B cell (primary cell): ENCODE measurements at regions of chr22 and their contacts with region 1.

Region 1: GRCh38 chr22:31749636-31750364 is at the start of gene PRR14L:
- DNase-seq: peak; percentile 99
- ATAC-seq: peak; percentile 74
- H3K4me3 ChIP-seq: peak within 1 kb of the TSS; percentile 81 to 95 (median 83)
- H3K4me3 Mint-ChIP-seq: peak within 1 kb of the TSS; percentile 95
- H3K27ac ChIP-seq: peak within 1 kb of the TSS; percentile 72 to 93
- H3K27ac Mint-ChIP-seq: peak within 1 kb of the TSS; percentile 99
- H3K4me1 ChIP-seq: peaks cover 41 to 43% of the 10 kb centered on the region in 2 donors
- H3K4me1 Mint-ChIP-seq: peaks cover 52% of the 10 kb centered on the region
- H3K27me3 ChIP-seq: no peaks in the 10 kb centered on the region
- H3K27me3 Mint-ChIP-seq: no peaks in the 10 kb centered on the region
- CTCF ChIP-seq: peak; percentile 17
- total RNA-seq, gene PRR14L: 69.6 and 78.5 TPM in 2 replicates

Region 2: DNA sequence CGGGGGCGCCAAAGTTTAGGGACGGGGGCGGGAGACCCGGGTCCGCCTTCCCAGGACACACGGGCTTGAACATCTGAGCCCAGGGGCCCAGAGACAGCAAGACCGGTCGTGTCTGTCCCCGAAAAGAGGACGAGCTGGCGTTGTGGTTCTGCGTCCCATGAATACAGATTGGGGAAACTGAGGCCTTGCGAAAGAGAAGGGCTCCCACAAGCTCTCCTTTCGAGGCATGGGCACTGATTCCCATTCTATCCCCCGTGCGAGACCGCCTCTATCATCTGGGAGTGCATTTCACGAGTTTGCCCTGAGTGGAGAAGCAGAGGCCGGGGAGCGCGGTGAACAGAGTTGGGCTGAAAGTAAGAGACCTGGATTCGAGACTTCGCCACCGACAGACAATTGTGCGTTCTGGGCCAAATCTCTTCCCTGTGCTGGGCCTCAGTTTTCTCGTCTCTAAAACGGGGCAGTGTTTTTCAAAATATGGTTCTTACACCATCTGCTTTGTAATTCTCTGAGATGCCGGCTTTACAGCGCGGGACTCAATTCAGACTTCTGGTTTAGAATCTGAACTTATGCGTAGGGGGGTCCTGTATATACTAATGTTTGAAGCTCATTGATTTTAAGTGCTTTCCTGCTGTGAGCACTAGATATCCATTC is 589.3 kb before region 1 on chr22:
- CTCF ChIA-PET with region 1: no interaction called
- POLR2A ChIA-PET with region 1: no interaction called
- intact Hi-C with region 1: loop called (anchors 5 kb)
- DNase-seq: no peak
- ATAC-seq: peak; percentile 29
- H3K4me3 ChIP-seq: peak overlapping the region; percentile 65 to 81 (median 74)
- H3K4me3 Mint-ChIP-seq: peak overlapping the region; percentile 95
- H3K27ac ChIP-seq: peak overlapping the region; percentile 82 to 83
- H3K27ac Mint-ChIP-seq: peak overlapping the region; percentile 95
- H3K4me1 ChIP-seq: peaks cover 19 to 24% of the 10 kb centered on the region in 2 donors
- H3K4me1 Mint-ChIP-seq: peaks cover 33% of the 10 kb centered on the region
- H3K27me3 ChIP-seq: peaks cover 0 to 2% (median 0%) of the 10 kb centered on the region in 4 experiments
- H3K27me3 Mint-ChIP-seq: no peaks in the 10 kb centered on the region
- CTCF ChIP-seq: no peak

Region 3: GRCh38 chr22:31399211-31400028 is 350.4 kb before region 1 on chr22 and contains the start of gene DRG1:
- CTCF ChIA-PET with region 1: no interaction called
- POLR2A ChIA-PET with region 1: no interaction called
- intact Hi-C with region 1: loop called (anchors 2 kb)
- DNase-seq: peak; percentile 95
- ATAC-seq: peak; percentile 99
- H3K4me3 ChIP-seq: peak within 1 kb of the TSS; percentile 79 to 88 (median 85)
- H3K4me3 Mint-ChIP-seq: peak within 1 kb of the TSS; percentile 98
- H3K27ac ChIP-seq: peak within 1 kb of the TSS; percentile 60 to 89
- H3K27ac Mint-ChIP-seq: peak within 1 kb of the TSS; percentile 95
- H3K4me1 ChIP-seq: peaks cover 13 to 17% of the 10 kb centered on the region in 2 donors
- H3K4me1 Mint-ChIP-seq: peaks cover 21% of the 10 kb centered on the region
- H3K27me3 ChIP-seq: no peaks in the 10 kb centered on the region
- H3K27me3 Mint-ChIP-seq: peaks cover 2% of the 10 kb centered on the region
- CTCF ChIP-seq: no peak
- total RNA-seq, gene DRG1: 58.9 and 77.7 TPM in 2 replicates

Region 4: DNA sequence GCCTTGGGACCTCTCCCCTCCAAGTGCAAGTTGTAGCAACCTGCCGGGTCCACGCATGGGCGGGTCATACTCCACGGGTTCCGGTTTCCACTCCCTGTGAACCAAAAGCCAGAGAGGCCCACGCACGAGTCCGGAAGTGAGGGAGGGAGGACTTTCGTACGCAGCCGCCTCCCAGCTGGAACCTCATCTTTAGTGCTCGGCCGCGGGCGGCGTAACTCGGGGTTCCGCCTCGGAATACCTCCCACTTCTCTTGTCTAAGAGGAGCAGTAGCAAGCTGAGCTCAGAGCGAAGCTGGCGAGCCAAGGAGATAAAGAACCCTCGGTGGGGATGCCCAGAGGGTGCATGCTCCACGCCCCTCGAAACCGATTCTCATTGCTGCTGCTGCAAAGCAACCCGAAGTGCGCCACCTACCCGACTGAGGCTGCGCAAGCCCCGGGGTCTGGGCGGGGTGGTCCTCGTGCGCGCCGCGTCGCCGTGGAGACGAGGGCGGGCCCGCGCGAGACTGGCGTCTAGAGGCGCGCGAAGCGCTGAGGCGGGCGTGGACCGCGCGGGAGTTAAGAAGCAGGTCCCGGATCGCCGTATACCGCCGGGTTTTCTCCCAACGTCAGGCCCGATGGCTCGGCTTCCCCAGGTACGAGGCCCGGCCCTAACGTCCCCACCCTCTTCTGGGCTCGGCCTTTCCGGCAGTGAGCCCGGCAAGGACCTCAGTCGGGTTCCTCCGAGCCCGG is 253.6 kb before region 1 on chr22 and contains the start of gene SFI1:
- CTCF ChIA-PET with region 1: no interaction called
- POLR2A ChIA-PET with region 1: interaction called, 7 read pairs
- intact Hi-C with region 1: loop called (anchors 2 kb)
- DNase-seq: peak; percentile 97
- ATAC-seq: peak; percentile 87
- H3K4me3 ChIP-seq: peak within 1 kb of the TSS; percentile 71 to 88 (median 80)
- H3K4me3 Mint-ChIP-seq: peak within 1 kb of the TSS; percentile 97
- H3K27ac ChIP-seq: peak within 1 kb of the TSS; percentile 83 to 85
- H3K27ac Mint-ChIP-seq: peak within 1 kb of the TSS; percentile 97
- H3K4me1 ChIP-seq: peaks cover 25 to 45% of the 10 kb centered on the region in 2 donors
- H3K4me1 Mint-ChIP-seq: peaks cover 39% of the 10 kb centered on the region
- H3K27me3 ChIP-seq: no peaks in the 10 kb centered on the region
- H3K27me3 Mint-ChIP-seq: no peaks in the 10 kb centered on the region
- CTCF ChIP-seq: peak; percentile 34
- total RNA-seq, gene SFI1: 182 and 191 TPM in 2 replicates

Region 5: GRCh38 chr22:31790240-31790639 is 40.4 kb after region 1 on chr22:
- CTCF ChIA-PET with region 1: interaction called, 4 read pairs
- POLR2A ChIA-PET with region 1: no interaction called
- intact Hi-C with region 1: loop called (anchors 5 kb)
- DNase-seq: peak; percentile 67
- ATAC-seq: peak; percentile 82
- H3K4me3 ChIP-seq: peak overlapping the region in 1 of 5 experiments; percentile 11
- H3K4me3 Mint-ChIP-seq: peak overlapping the region; percentile 74
- H3K27ac ChIP-seq: peak overlapping the region; percentile 8 to 64
- H3K27ac Mint-ChIP-seq: peak overlapping the region; percentile 80
- H3K4me1 ChIP-seq: peaks cover 24 to 35% of the 10 kb centered on the region in 2 donors
- H3K4me1 Mint-ChIP-seq: peaks cover 35% of the 10 kb centered on the region
- H3K27me3 ChIP-seq: no peaks in the 10 kb centered on the region
- H3K27me3 Mint-ChIP-seq: no peaks in the 10 kb centered on the region
- CTCF ChIP-seq: no peak

Region 6: GRCh38 chr22:31818481-31819392 is 68.9 kb after region 1 on chr22:
- CTCF ChIA-PET with region 1: no interaction called
- POLR2A ChIA-PET with region 1: no interaction called
- intact Hi-C with region 1: no loop called
- DNase-seq: no peak
- ATAC-seq: no peak
- H3K4me3 ChIP-seq: no peak overlapping the region
- H3K4me3 Mint-ChIP-seq: no peak overlapping the region
- H3K27ac ChIP-seq: no peak overlapping the region
- H3K27ac Mint-ChIP-seq: no peak overlapping the region
- H3K4me1 ChIP-seq: no peaks in the 10 kb centered on the region
- H3K4me1 Mint-ChIP-seq: peaks cover 2% of the 10 kb centered on the region
- H3K27me3 ChIP-seq: no peaks in the 10 kb centered on the region
- H3K27me3 Mint-ChIP-seq: no peaks in the 10 kb centered on the region
- CTCF ChIP-seq: no peak